GM13977 (cell line): ENCODE measurements at regions of chr7 and their contacts with region 1.

Region 1: DNA sequence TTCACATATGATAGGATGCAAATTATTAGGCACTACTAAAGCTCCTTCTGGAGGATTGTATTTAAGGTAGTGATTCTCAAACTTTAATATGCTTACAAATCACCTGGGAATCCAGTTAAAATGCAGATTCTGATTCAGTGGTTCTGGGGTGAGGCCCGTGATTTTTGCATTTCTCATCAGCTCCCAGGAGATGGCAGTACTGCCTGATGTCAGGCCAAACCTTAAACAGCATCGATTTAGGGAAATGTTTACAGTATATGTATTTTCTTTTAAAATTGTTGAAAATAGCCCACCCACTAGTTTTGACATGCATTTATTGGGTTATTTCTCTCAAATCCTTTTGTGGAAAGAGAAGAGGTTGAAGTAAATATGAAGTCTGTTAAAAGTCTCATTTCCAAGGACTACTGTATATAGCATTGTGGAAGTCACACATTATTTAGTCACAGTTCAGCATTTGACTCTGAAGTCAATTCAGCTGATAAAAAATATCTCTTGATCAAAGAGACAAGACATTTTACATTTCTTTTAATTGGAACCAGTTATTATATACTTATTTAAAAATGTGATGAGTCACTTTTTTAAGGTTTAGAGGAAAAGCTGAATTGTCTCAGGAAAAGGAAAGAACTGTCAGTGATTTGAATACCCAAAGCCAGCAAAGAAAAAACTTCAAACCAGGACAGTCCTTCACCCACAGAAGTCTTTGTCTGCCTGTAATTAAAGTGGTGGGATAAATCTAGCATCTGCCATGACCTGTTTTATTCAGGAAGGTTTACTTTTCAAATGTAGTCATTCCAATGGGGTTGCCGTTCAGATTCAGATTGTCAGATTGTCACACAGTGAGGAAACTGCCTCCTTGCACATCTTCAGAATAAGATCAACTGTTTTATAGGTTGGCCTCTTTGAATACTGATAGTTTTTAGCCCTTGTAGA is 21.1 kb upstream of the HBP1 start:
- DNase-seq: peak; percentile 36
- CTCF ChIP-seq: peak; percentile 65

Region 2: GRCh38 chr7:106793015-106793975 is 354.4 kb before region 1 on chr7:
- in situ Hi-C with region 1: loop called (anchors 5 kb)
- DNase-seq: peak; percentile 41
- CTCF ChIP-seq: peak; percentile 73

Region 3: DNA sequence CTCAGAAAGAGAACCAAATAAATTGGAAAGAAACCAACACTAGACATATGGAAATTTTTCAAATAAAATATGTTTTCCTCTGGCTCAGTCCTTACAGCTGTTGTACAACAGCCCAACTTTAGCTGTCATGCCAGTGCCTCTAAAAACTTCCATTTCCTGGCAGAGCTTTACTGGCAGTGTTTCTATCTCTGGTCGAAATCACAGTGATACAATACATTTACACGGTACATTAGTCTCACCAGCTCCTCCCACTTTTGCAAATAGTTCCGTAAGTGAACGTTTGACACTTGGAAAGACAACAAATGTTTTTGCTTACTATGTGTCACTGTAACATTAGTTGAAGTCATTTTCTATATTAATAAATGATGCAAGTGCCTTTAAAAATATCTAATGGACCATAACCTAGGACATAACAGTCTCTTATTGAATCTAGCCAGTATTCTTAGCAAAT is 462.1 kb after region 1 on chr7:
- in situ Hi-C with region 1: no loop called
- DNase-seq: no peak
- CTCF ChIP-seq: no peak